ENCODE measurements at regions of chr14 and their contacts with region 1.

Region 1: GRCh38 chr14:69129264-69129880 is 23.5 kb downstream of the DCAF5 start:
- DNase-seq: peak; percentile 71
- CTCF ChIP-seq: peak; percentile 93

Region 2: GRCh38 chr14:69101331-69101826 is 28.0 kb before region 1 on chr14:
- CTCF ChIA-PET with region 1: interaction called, 27 read pairs
- POLR2A ChIA-PET with region 1: no interaction called
- DNase-seq: peak; percentile 15
- CTCF ChIP-seq: peak; percentile 21

Region 3: DNA sequence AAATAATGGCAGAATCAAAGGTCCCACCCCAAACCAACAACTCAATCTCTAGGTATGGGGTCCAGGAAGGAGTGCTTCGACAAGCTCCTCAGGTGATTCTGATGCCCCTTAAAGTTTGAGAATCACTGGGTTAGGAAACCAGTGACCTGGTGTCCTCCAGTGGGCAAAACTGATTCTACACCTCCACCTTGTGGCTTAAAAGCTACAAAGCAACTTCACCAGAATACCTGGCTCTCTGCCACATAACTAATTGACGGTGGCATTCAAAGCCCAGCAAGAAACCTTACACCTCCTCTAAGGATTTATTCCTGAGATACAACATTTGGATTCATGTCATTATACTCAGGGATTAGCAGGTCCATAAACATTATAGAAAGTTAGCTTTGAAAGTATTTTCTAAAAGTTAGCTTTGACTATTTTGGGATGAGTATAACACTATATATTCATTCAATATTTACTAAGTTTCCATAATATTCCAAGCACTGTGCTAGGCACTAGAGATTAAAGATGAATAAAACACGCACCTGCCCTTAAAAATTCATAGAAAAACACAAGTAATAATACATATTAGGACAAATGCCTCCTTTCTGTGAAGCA is 21.9 kb before region 1 on chr14:
- CTCF ChIA-PET with region 1: interaction called, 35 read pairs
- POLR2A ChIA-PET with region 1: no interaction called
- DNase-seq: peak; percentile 38
- CTCF ChIP-seq: peak; percentile 37

Region 4: DNA sequence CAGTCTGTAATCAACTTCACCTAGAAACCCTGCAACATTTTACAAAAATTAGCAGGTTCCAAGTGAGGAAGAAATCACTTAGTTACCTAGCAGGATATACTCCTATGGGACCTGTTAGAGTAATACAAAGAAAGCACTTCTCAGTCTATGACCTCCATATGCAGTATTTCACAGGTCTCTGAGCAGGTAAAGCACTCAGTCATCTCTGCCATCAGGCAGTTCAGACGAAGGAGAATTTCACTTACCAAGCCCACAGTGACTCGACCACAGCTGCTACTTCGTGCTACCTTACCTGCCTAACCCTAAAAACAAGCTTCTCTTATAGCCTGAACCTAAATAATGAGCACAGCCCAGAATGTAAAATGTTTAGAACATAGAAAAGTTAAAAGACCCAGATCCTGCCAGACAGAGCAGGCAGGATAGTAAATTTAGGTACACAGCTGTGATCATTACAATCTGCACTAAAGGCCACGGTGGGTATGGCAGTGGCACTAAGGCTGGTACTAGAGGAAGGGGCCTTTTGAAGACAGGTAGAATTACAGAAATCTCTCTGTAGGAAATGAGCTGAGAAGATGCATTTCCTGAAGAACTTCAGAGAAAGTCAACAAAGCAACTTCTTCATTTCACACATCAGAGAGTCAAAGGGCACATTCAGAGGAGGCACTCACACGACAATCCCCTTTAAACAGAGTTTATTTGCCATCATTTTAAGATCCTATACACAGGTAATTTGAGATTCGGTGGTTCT is 12.2 kb before region 1 on chr14:
- CTCF ChIA-PET with region 1: interaction called, 27 read pairs
- POLR2A ChIA-PET with region 1: no interaction called
- DNase-seq: no peak
- CTCF ChIP-seq: no peak

Region 5: GRCh38 chr14:69151315-69152049 is 22.1 kb after region 1 on chr14:
- CTCF ChIA-PET with region 1: interaction called, 22 read pairs
- POLR2A ChIA-PET with region 1: no interaction called
- DNase-seq: peak; percentile 90
- CTCF ChIP-seq: peak; percentile 64

Region 6: DNA sequence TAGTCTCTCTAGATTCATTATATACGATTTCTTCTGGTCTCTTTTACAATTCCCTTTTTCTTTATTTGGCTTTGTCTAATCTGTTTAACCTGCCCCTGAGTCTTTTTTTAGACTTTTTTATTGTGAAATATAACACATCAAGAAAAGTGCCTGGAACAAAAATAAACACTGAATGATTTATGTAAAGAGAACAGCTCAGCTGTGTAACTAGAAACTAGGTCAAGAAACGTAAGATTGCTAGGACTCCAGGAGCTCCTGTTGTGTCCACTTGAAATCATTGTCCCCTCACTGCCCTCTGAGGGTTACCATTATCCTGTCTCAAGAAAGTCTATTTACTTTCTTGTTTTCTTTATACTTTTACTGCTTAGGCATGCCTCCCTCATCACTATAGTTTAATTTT is 85.0 kb after region 1 on chr14:
- CTCF ChIA-PET with region 1: no interaction called
- POLR2A ChIA-PET with region 1: no interaction called
- DNase-seq: no peak
- CTCF ChIP-seq: no peak

Region 7: DNA sequence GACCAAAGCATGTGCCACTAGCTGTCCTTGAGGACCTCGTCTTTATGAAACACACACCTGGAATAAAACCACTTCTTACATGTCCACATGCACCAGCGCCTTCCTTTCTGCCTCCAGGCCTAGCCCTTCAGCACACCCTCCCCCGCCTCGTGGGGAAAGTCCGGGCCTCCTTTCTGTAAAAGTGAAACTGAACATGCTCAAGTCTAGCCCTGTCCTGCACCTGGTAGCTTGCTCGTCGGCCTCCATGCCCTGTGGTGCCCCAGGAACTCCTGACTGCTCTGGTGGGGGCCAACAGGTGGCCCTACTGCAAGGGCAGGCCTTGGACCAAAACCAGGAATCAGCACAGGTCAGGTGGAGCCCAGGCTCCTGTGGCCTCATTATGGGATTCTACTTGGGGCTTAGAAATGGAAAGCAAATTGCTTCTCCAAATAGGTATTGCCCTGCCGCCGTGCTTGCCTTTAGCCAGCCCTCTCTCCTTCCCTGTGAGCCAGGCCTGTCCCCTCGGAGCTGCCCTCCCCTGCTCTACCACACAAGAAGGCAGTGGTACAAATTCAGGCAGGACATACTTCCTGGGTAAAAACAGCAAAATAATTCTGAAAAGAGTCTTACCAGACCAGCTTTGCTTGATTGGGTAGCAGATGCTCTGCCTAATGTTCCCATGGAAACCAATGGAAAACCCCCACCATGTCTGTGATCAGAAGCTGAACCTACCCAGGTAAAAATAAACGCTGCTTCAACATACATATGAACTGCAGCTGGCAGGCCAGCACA is 225.2 kb after region 1 on chr14:
- CTCF ChIA-PET with region 1: no interaction called
- POLR2A ChIA-PET with region 1: no interaction called
- DNase-seq: peak; percentile 91
- CTCF ChIP-seq: no peak

Region 8: DNA sequence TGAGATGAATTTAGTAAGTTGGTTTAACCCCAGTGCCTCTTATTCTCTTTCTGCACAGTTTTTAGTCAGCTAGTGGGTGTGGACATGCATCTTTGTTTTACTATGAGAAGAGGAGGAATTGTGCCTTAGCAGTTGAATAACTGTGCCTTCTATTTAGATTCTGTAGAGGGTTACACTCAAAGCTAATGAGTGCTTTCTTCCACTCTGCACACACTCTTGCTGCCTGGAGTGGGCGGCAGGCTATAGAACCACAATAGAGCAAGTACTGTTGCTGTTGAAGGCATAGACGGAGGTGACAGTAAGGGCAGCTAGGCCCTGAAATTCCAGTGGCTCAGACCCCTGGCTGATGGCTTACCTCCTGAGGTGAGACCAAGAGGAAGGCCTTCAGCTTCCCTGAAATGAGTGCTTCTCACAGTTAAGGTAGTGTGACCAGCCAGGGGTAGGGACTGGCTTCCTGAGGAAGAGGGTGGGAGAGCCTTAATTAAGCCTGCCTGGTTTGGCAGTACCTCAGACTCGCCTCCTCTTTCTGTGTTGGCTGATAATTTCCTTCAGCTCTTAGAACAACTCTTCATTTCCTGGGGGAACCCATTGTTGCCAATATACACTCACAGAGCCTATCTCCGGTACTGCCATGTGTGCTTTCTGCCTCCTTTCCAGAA is 506.7 kb after region 1 on chr14:
- CTCF ChIA-PET with region 1: no interaction called
- POLR2A ChIA-PET with region 1: no interaction called
- DNase-seq: peak; percentile 35
- CTCF ChIP-seq: no peak

Measured in GM10248 (cell line).